Transverse colon (tissue), 4 donors: ENCODE measurements at regions of chr2 and their contacts with region 1.

Region 1: GRCh38 chr2:226234183-226234582 is 565.4 kb downstream of the IRS1 start:
- DNase-seq: no peak
- H3K4me3 ChIP-seq: no peak overlapping the region
- H3K27ac ChIP-seq: no peak overlapping the region
- H3K4me1 ChIP-seq: no peaks in the 10 kb centered on the region
- H3K27me3 ChIP-seq: no peaks in the 10 kb centered on the region
- CTCF ChIP-seq: no peak
- EP300 ChIP-seq: no peak
- POLR2A ChIP-seq: no peak

Region 2: GRCh38 chr2:224909885-224910573 is 1324.2 kb before region 1 on chr2:
- in situ Hi-C with region 1: no loop called
- intact Hi-C with region 1: loop called (anchors 10 kb)
- DNase-seq: no peak
- H3K4me3 ChIP-seq: no peak overlapping the region
- H3K27ac ChIP-seq: peak overlapping the region in 2 of 4 donors; percentile 31 to 45
- H3K4me1 ChIP-seq: peaks cover 0 to 17% (median 4%) of the 10 kb centered on the region in 4 donors
- H3K27me3 ChIP-seq: no peaks in the 10 kb centered on the region
- CTCF ChIP-seq: no peak
- EP300 ChIP-seq: no peak
- POLR2A ChIP-seq: no peak

Region 3: GRCh38 chr2:226791487-226792081 is 557.4 kb after region 1 on chr2:
- in situ Hi-C with region 1: no loop called
- intact Hi-C with region 1: no loop called
- DNase-seq: peak; percentile 93
- H3K4me3 ChIP-seq: peak overlapping the region; percentile 52 to 78 (median 70)
- H3K27ac ChIP-seq: peak overlapping the region; percentile 93 to 96 (median 94)
- H3K4me1 ChIP-seq: peaks cover 0 to 61% (median 23%) of the 10 kb centered on the region in 4 donors
- H3K27me3 ChIP-seq: no peaks in the 10 kb centered on the region
- CTCF ChIP-seq: peak; percentile 55 to 88 (median 58)
- EP300 ChIP-seq: no peak
- POLR2A ChIP-seq: peak; percentile 53